ENCODE measurements at regions of chr6 and their contacts with region 1.

Region 1: DNA sequence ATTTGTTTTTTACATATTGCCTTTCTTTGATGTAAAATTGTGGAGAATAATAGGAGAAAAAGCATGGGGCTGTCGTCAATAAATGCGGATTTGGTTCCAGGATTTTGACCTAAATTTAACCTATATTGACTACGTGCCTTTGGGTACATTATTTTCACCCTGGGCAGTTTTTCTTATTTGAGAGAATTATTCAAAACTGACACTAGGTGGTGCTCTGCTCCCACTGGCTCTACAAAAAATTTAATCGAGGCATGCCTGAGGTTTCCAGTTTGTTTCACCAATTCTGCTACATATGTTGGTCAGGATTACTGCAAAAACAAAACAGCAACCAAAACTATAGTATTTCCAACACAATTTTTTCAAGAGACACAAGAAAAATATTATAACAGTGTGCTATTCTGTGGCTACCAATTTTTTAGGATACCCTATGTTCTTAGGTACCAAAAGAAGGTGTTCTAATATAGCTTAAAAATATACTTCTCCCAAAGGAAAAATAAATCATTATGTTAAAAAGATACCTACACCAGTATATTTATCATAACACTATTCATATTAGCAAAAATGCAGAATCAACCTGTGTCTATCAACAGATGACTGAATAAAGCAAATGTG is 48.6 kb upstream of the FABP7 start:
- DNase-seq: peak in 1 of 5 donors; percentile 15
- H3K4me3 ChIP-seq: no peak overlapping the region
- H3K4me3 Mint-ChIP-seq: no peak overlapping the region
- H3K27ac ChIP-seq: no peak overlapping the region
- H3K27ac Mint-ChIP-seq: no peak overlapping the region
- H3K4me1 ChIP-seq: no peaks in the 10 kb centered on the region
- H3K4me1 Mint-ChIP-seq: no peaks in the 10 kb centered on the region
- H3K27me3 ChIP-seq: no peaks in the 10 kb centered on the region
- H3K27me3 Mint-ChIP-seq: peaks cover 6 to 13% of the 10 kb centered on the region in 2 donors

Region 2: DNA sequence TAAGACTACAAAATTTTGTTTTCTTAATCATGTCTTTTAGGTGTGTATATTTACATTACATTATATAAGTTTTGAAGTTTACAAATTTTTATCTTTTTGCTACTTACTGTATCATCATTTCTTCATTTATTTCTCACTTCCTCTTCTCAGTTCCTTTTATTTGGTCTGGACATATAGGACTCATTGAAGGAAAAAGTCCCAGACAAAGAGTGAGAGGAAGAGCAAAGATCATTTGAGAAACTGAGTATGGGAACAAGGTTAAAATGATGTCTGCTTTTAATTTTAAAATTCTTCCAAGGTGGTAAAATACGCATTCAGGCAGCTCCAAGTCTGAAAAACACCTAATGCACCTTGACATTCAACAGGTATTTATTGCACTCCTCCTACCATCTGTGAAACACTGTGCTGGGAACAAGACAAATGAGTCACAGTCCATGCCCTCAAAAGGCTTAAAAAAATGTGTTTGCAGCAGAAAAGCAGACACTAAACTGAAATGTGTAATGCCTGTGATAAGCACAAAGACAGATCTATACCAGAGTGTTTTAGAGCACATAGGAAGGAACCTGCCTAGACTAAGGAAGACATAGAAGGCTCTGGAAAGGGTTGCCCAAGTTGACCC is 57.4 kb before region 1 on chr6:
- CTCF ChIA-PET with region 1: no interaction called
- POLR2A ChIA-PET with region 1: no interaction called
- DNase-seq: no peak
- H3K4me3 ChIP-seq: no peak overlapping the region
- H3K4me3 Mint-ChIP-seq: no peak overlapping the region
- H3K27ac ChIP-seq: no peak overlapping the region
- H3K27ac Mint-ChIP-seq: no peak overlapping the region
- H3K4me1 ChIP-seq: no peaks in the 10 kb centered on the region
- H3K4me1 Mint-ChIP-seq: no peaks in the 10 kb centered on the region
- H3K27me3 ChIP-seq: no peaks in the 10 kb centered on the region
- H3K27me3 Mint-ChIP-seq: peaks cover 0 to 4% of the 10 kb centered on the region in 2 donors

Region 3: DNA sequence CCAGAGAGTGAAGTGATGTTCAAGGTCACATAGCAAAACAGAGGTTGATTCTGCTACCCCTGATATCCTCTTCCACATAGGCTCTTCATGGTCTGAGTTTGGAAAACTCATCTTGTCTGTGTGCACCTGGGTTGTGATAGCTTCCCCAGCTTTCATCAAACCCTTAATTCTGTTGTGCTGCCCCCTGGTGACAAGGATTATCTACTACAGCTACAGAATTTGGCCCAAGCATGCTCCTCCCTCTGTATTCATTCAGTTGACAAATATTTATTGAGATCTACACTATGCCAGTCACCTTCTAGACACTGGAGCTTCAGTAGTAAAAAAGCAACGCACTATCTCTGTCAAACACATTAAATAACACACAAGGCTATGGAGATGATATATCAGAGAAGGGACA is 108.6 kb after region 1 on chr6:
- CTCF ChIA-PET with region 1: interaction called, 10 read pairs
- POLR2A ChIA-PET with region 1: no interaction called
- DNase-seq: peak; percentile 3 to 48 (median 9)
- H3K4me3 ChIP-seq: no peak overlapping the region
- H3K4me3 Mint-ChIP-seq: no peak overlapping the region
- H3K27ac ChIP-seq: no peak overlapping the region
- H3K27ac Mint-ChIP-seq: no peak overlapping the region
- H3K4me1 ChIP-seq: no peaks in the 10 kb centered on the region
- H3K4me1 Mint-ChIP-seq: no peaks in the 10 kb centered on the region
- H3K27me3 ChIP-seq: no peaks in the 10 kb centered on the region
- H3K27me3 Mint-ChIP-seq: peaks cover 2 to 8% of the 10 kb centered on the region in 2 donors